Activated CD8-positive, alpha-beta memory T cell treated with anti-CD3 and anti-CD28 coated beads, Interleukin-2, amount 10 ng/mL, durations not matched to agents 7 days and 5 days (primary cell): ENCODE measurements at regions of chr1 and their contacts with region 1.

Region 1: GRCh38 chr1:26541816-26542711 is 12.5 kb downstream of the RPS6KA1 start:
- DNase-seq: peak; percentile 95
- ATAC-seq: peak; percentile 73
- H3K4me3 Mint-ChIP-seq: peak overlapping the region; percentile 73
- H3K27ac Mint-ChIP-seq: peak overlapping the region; percentile 97
- H3K4me1 Mint-ChIP-seq: peaks cover 85% of the 10 kb centered on the region
- H3K27me3 Mint-ChIP-seq: no peaks in the 10 kb centered on the region

Region 2: DNA sequence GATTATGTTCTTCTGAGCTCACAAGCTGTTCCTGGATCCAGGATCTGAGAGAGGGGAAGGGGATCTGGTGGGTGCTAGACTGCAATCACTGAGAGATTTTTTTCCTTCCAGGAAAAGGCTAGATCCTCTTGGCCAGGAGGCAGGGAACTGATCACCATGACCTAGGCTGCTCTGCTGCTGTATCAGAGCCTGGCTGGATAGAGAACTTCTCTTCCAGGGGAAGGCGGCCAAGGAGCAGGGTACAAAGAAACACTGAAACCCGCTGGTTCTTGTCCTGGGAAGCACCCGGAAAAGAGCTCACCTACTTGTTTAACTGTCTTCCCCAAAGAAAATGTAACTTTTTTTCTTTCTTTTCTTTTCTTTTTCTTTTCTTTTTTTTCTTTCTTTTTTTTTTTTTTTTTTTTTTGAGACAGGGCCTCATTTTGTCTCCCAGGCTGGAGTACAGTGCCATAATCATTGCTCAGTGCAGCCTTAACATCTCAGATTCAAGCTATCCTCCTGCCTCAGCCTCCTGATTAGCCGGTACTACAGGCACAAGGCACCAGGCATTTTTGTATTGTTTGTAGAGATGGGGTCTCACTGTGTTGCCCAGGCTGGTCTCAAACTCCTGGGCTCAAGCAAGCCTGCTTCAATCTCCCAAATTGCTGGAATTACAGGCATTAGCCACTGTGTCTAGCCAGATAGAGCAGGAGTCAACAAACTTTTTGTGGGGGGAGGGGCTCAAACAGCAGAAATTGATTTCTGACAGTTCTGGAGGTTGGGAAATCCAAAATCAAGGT is 24.9 kb before region 1 on chr1:
- CTCF ChIA-PET with region 1: interaction called, 17 read pairs
- DNase-seq: no peak
- ATAC-seq: no peak
- H3K4me3 Mint-ChIP-seq: no peak overlapping the region
- H3K27ac Mint-ChIP-seq: no peak overlapping the region
- H3K4me1 Mint-ChIP-seq: no peaks in the 10 kb centered on the region
- H3K27me3 Mint-ChIP-seq: peaks cover 11% of the 10 kb centered on the region

Region 3: GRCh38 chr1:26524181-26524580 is 17.9 kb before region 1 on chr1:
- CTCF ChIA-PET with region 1: interaction called, 76 read pairs
- DNase-seq: no peak
- ATAC-seq: no peak
- H3K4me3 Mint-ChIP-seq: no peak overlapping the region
- H3K27ac Mint-ChIP-seq: no peak overlapping the region
- H3K4me1 Mint-ChIP-seq: peaks cover 4% of the 10 kb centered on the region
- H3K27me3 Mint-ChIP-seq: peaks cover 29% of the 10 kb centered on the region

Region 4: DNA sequence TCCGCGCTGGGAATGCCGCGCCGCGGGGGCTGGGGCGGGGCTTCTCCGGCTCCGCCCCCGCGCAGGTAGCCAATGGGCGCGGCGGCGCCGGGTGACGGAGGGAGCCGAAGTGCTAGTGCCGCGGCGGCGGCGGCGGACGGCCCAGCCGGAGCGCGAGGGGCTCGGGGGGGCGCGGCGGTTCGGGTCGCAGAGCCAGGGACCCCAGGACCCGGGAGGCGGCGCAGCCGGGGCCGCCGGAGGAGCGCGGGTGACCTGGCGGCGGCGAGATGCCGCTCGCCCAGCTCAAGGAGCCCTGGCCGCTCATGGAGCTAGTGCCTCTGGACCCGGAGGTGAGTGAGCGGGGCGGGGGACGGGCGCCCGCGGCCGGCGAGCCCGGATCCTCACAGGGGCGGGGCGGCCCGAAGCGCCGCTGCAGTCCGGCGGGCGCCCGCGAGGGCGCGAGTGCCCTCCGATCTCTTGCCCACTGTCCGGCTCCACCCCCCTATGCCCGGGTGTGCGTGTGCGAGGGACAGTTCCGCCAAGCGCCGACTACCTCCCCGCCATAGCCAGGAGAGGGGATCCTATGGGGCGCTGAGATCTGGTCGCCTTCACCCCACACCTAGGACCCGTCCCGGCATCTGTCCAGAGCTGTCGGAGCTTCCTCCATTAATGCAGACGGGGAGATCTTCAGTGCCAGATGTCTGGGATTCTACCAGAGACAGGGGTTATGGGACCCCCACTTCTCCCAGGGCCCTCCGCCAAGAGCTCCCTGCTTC is 12.2 kb before region 1 on chr1 and contains the start of gene RPS6KA1:
- CTCF ChIA-PET with region 1: interaction called, 76 read pairs
- DNase-seq: peak; percentile 71
- ATAC-seq: peak; percentile 96
- H3K4me3 Mint-ChIP-seq: peak within 1 kb of the TSS; percentile 79
- H3K27ac Mint-ChIP-seq: peak within 1 kb of the TSS; percentile 81
- H3K4me1 Mint-ChIP-seq: peaks cover 32% of the 10 kb centered on the region
- H3K27me3 Mint-ChIP-seq: peaks cover 6% of the 10 kb centered on the region
- total RNA-seq, gene RPS6KA1: 158 to 181 TPM

Region 5: GRCh38 chr1:26555550-26556510 is 13.8 kb after region 1 on chr1:
- CTCF ChIA-PET with region 1: interaction called, 21 read pairs
- DNase-seq: no peak
- ATAC-seq: no peak
- H3K4me3 Mint-ChIP-seq: no peak overlapping the region
- H3K27ac Mint-ChIP-seq: no peak overlapping the region
- H3K4me1 Mint-ChIP-seq: peaks cover 29% of the 10 kb centered on the region
- H3K27me3 Mint-ChIP-seq: no peaks in the 10 kb centered on the region